GM12878 (cell line): ENCODE measurements at regions of chr22 and their contacts with region 1.

Region 1: DNA sequence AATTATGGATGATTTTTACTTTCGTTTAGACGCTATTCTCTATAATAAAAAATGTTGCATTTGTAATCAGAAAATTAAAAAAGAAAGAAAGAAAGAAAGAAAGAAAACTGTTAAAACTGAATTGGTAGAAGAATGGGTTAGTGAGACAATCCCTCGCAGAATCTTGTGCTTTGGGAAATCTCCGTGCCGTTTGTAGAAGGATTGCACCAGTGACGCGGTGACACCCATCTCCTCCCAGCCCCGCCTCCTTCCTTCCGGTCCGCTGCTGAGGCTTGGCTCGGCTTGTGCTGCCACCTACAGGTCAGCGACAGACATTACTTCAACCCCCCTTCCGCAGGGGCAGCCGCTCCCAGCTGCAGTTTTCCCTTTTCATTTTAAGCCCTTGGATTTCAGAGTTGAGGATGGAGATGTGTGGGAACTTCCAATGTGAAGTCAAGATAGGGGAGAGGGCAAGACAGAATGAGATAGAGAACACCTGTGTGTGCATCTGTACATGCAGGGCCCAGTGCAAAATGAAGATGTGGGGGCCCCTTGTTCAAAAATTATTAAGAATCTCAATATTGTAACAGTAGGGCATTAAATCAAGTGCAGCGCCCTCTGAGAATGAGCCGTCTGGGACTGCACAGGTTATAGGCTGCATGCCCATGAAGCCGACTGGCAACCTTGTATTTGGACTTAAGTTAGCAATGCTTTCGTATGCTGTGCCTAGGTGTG is 41.1 kb downstream of the TST start:
- DNase-seq: peak; percentile 57
- ATAC-seq: peak; percentile 90
- H3K4me3 ChIP-seq: peak overlapping the region; percentile 47; the same call in 1 of the 2 replicates
- H3K27ac ChIP-seq: peak overlapping the region; percentile 13; the same call in 1 of the 2 replicates
- H3K4me1 ChIP-seq: no peaks in the 10 kb centered on the region; the same call in 1 of the 2 replicates
- H3K27me3 ChIP-seq: no peaks in the 10 kb centered on the region; a peak in 1 of 4 replicates
- CTCF ChIP-seq: peak; percentile 84 to 99 (median 91)
- EP300 ChIP-seq: no peak
- POLR2A ChIP-seq: no peak; the same call in 1 of the 2 replicates
- RAD21 ChIP-seq: peak; percentile 90

Region 2: DNA sequence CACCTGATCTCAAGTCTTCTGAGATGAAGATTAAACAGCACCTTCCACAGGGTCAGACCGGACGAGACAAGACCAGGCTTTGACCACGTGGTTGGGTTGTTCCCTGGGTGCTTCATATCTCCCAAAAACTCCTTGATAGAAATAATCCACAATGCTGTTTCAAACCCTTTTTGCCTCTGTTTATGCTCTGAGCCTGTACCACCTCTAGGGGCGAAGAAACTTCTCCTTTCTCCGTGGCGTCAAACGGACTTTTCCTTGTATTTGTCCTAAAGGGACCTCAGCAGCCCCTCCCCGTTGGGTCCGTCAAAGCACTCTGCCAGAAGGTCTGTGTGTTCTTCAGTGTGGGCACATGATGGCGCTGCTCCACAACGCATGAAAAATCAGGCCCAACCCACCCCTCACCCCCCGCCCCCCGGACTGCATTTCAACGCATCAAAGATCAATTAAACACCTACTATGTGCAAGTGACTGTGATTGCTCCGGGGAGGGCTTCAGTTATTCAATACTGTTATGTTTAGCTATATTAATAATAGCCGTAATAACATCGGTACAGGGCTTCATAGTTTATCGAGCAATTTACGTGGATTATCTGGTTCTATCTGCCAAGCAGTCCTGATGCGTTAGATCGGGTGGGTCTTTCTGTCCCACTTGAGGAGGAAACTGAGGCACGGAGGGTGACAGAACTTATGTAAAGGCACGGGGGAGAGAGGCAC is 431.9 kb before region 1 on chr22:
- CTCF ChIA-PET with region 1: interaction called, 5 read pairs
- POLR2A ChIA-PET with region 1: no interaction called
- RAD21 ChIA-PET with region 1: interaction called, 5 read pairs
- SMC1A ChIA-PET with region 1: interaction called, 3 read pairs
- in situ Hi-C with region 1: no loop called
- intact Hi-C with region 1: loop called (anchors 10 kb)
- DNase-seq: no peak
- ATAC-seq: peak; percentile 73
- H3K4me3 ChIP-seq: no peak overlapping the region
- H3K27ac ChIP-seq: no peak overlapping the region
- H3K4me1 ChIP-seq: no peaks in the 10 kb centered on the region
- H3K27me3 ChIP-seq: no peaks in the 10 kb centered on the region
- CTCF ChIP-seq: peak; percentile 42 to 54 (median 53); a peak in 5 of 6 replicates
- EP300 ChIP-seq: no peak
- POLR2A ChIP-seq: no peak
- RAD21 ChIP-seq: peak; percentile 60

Region 3: DNA sequence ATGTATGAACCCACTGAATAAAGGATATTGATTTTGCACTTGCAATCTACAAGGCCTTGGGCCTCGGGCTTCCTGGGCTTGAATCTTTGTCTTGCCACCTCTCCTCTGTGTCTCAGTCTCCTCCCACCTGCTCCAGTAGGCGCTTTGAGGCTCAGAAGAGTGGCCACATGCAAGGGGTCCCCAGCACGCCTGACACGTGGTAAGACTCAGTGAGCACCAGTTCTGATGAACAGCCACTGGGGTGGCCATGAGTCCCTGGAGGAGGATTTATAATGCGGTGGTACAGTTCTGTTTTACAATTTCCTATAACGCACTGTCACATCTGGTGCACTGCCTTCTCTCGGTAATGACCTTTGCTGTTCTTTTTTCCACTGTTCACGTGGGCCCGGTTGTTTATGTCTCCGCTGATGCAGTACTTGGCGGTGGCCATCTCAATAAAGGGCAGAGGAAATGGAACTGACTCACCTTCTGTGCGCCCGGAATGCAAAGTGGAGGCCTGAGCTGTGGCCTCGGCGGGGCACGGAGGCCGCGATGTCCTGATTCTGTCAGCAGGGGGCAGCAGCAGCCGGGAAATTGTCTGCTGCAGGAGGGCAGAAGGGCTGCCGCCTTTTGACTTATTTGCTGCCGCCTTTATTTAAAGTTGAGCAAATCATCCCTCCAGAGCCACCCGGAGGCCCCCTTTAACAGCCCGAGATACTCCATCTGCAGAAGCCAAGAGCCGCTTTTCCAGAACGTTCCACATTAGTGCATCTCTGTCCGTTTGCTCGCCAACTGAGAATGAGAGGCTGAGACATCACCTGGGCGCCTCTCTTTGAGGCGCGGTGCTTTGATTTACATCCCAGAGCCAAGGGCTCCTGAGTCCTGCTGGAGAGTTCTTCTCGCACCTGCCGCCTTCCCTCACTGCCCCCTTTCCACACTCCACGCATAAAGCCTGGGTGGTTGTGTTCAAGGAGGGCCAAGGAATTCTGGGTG is 196.2 kb before region 1 on chr22:
- CTCF ChIA-PET with region 1: interaction called, 115 read pairs
- POLR2A ChIA-PET with region 1: interaction called, 5 read pairs
- RAD21 ChIA-PET with region 1: interaction called, 34 read pairs
- SMC1A ChIA-PET with region 1: interaction called, 29 read pairs
- in situ Hi-C with region 1: loop called (anchors 5 kb)
- intact Hi-C with region 1: loop called (anchors 1 kb)
- DNase-seq: peak; percentile 33
- ATAC-seq: peak; percentile 98
- H3K4me3 ChIP-seq: no peak overlapping the region
- H3K27ac ChIP-seq: no peak overlapping the region
- H3K4me1 ChIP-seq: peaks cover under 1% of the 10 kb centered on the region; the same call in 1 of the 2 replicates
- H3K27me3 ChIP-seq: peaks cover 0 to 5% of the 10 kb centered on the region in 2 experiments; a peak in 1 of 4 replicates
- CTCF ChIP-seq: peak; percentile 90 to 97 (median 95)
- EP300 ChIP-seq: no peak; a peak in 1 of 4 replicates
- POLR2A ChIP-seq: no peak
- RAD21 ChIP-seq: peak; percentile 84

Region 4: GRCh38 chr22:36873680-36874537 is 104.2 kb before region 1 on chr22:
- CTCF ChIA-PET with region 1: interaction called, 19 read pairs
- POLR2A ChIA-PET with region 1: no interaction called
- RAD21 ChIA-PET with region 1: interaction called, 20 read pairs
- SMC1A ChIA-PET with region 1: interaction called, 10 read pairs
- in situ Hi-C with region 1: no loop called
- intact Hi-C with region 1: no loop called
- DNase-seq: peak; percentile 69
- ATAC-seq: peak; percentile 96
- H3K4me3 ChIP-seq: no peak overlapping the region
- H3K27ac ChIP-seq: peak overlapping the region; percentile 59
- H3K4me1 ChIP-seq: peaks cover 16% of the 10 kb centered on the region
- H3K27me3 ChIP-seq: no peaks in the 10 kb centered on the region
- CTCF ChIP-seq: peak; percentile 55 to 64 (median 62)
- EP300 ChIP-seq: 0 out of 4 replicates have a peak, but pooled peaks have one; percentile 4 to 16
- POLR2A ChIP-seq: no peak
- RAD21 ChIP-seq: peak; percentile 63

Region 5: GRCh38 chr22:36940676-36941075 is 37.4 kb before region 1 on chr22:
- CTCF ChIA-PET with region 1: interaction called, 33 read pairs
- POLR2A ChIA-PET with region 1: interaction called, 5 read pairs
- RAD21 ChIA-PET with region 1: interaction called, 19 read pairs
- SMC1A ChIA-PET with region 1: interaction called, 11 read pairs
- in situ Hi-C with region 1: no loop called
- intact Hi-C with region 1: loop called (anchors 5 kb)
- DNase-seq: peak; percentile 69
- ATAC-seq: peak; percentile 86
- H3K4me3 ChIP-seq: no peak overlapping the region
- H3K27ac ChIP-seq: peak overlapping the region; percentile 63; the same call in 1 of the 2 replicates
- H3K4me1 ChIP-seq: peaks cover 29% of the 10 kb centered on the region
- H3K27me3 ChIP-seq: no peaks in the 10 kb centered on the region
- CTCF ChIP-seq: no peak
- EP300 ChIP-seq: no peak
- POLR2A ChIP-seq: no peak
- RAD21 ChIP-seq: no peak

Region 6: DNA sequence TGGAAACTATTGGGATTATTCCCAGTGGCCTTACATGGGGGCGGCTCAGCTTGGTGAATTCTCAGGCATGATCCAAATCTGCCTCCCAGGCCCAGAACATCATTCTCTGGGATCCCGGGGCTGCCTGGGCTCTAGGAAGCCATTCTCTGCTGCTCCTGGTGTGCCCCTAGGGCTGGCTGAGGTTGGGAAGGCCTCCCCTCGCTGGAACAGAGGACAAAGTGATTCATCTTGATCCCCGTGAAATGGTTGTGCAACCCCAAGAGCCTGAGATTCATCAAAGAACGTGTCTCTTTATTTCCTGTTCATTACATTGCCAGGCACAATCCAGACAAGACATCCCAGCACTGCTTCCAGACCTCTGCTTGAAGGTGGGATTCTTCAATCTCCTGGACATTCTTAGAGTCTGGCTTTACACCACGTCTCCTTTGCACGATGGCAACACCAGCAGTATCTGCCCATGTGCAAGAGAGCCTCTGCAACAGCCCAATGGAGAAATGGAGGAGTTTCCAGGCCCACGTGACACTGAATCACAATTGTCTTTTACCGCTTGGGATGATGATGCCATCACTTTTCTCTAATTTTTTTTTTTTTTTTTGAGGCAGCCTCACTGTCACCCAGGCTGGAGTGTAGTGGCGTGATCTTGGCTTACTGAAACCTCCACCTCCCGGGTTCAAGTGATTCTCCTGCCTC is 11.1 kb before region 1 on chr22:
- CTCF ChIA-PET with region 1: interaction called, 51 read pairs
- POLR2A ChIA-PET with region 1: no interaction called
- RAD21 ChIA-PET with region 1: interaction called, 7 read pairs
- SMC1A ChIA-PET with region 1: interaction called, 12 read pairs
- in situ Hi-C with region 1: no loop called
- intact Hi-C with region 1: no loop called
- DNase-seq: no peak
- ATAC-seq: no peak
- H3K4me3 ChIP-seq: no peak overlapping the region
- H3K27ac ChIP-seq: no peak overlapping the region
- H3K4me1 ChIP-seq: no peaks in the 10 kb centered on the region
- H3K27me3 ChIP-seq: no peaks in the 10 kb centered on the region
- CTCF ChIP-seq: no peak
- EP300 ChIP-seq: no peak
- POLR2A ChIP-seq: no peak
- RAD21 ChIP-seq: no peak